ENCODE measurements at regions of chr1 and their contacts with region 1.

Region 1: GRCh38 chr1:213979751-213980586 is 7.8 kb upstream of the PROX1 start:
- DNase-seq: no peak
- ATAC-seq: peak in 1 of 4 experiments; percentile 13
- H3K4me3 ChIP-seq: no peak overlapping the region
- H3K4me3 Mint-ChIP-seq: peak overlapping the region in 1 of 3 donors; percentile 23
- H3K27ac ChIP-seq: no peak overlapping the region
- H3K27ac Mint-ChIP-seq: no peak overlapping the region
- H3K4me1 ChIP-seq: peaks cover 3 to 25% of the 10 kb centered on the region in 2 experiments
- H3K4me1 Mint-ChIP-seq: peaks cover 21 to 28% (median 26%) of the 10 kb centered on the region in 3 donors
- H3K27me3 ChIP-seq: peaks cover 16 to 60% of the 10 kb centered on the region in 2 experiments
- H3K27me3 Mint-ChIP-seq: peaks cover 73 to 77% of the 10 kb centered on the region in 2 donors

Region 2: DNA sequence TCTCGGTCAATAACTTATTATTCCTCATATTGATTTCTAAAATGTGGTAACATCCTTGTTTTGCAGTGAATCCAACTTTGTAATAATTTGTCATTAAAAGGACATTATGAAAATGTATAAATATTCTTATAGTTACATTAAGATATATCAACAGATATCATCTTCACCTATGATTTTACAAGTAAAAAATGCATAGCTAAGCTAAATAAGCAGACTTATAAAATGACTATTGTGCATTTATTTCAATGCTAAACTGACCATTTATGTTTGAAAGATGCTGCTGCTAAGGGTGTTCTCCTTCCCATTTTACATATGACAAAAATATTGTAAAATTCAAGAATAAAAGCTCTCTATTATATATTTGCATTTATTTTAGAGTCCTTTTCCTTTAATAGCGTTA is 15.6 kb after region 1 on chr1:
- CTCF ChIA-PET with region 1: interaction called in 1 of 2 experiments, 12 read pairs
- POLR2A ChIA-PET with region 1: no interaction called
- DNase-seq: no peak
- ATAC-seq: no peak
- H3K4me3 ChIP-seq: no peak overlapping the region
- H3K4me3 Mint-ChIP-seq: no peak overlapping the region
- H3K27ac ChIP-seq: no peak overlapping the region
- H3K27ac Mint-ChIP-seq: no peak overlapping the region
- H3K4me1 ChIP-seq: no peaks in the 10 kb centered on the region
- H3K4me1 Mint-ChIP-seq: no peaks in the 10 kb centered on the region
- H3K27me3 ChIP-seq: peaks cover 9 to 15% of the 10 kb centered on the region in 2 experiments
- H3K27me3 Mint-ChIP-seq: peaks cover 40 to 46% of the 10 kb centered on the region in 2 donors

Region 3: DNA sequence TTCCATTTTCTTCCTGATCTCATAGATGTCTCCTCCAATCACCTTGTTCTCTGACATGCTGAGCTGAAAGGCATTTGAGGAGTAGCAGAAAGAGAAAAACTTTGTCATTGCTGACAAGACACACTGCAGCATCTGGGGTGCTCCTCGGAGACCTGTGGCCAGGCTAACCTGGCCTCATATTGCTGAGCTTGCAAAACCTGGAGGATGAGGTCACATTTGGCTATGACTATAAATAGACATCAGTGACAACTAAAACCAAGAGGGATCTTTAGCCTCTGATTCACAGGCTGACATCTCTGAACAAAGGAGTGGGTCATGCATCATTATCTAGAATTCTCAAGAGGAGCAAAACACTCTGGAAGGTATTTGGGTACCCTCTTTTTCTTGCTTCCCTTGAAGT is 91.5 kb after region 1 on chr1:
- CTCF ChIA-PET with region 1: no interaction called
- POLR2A ChIA-PET with region 1: no interaction called
- DNase-seq: no peak
- ATAC-seq: no peak
- H3K4me3 ChIP-seq: no peak overlapping the region
- H3K4me3 Mint-ChIP-seq: no peak overlapping the region
- H3K27ac ChIP-seq: no peak overlapping the region
- H3K27ac Mint-ChIP-seq: no peak overlapping the region
- H3K4me1 ChIP-seq: no peaks in the 10 kb centered on the region
- H3K4me1 Mint-ChIP-seq: no peaks in the 10 kb centered on the region
- H3K27me3 ChIP-seq: peaks cover 0 to 2% of the 10 kb centered on the region in 2 experiments
- H3K27me3 Mint-ChIP-seq: peaks cover 14 to 23% of the 10 kb centered on the region in 2 donors

Region 4: DNA sequence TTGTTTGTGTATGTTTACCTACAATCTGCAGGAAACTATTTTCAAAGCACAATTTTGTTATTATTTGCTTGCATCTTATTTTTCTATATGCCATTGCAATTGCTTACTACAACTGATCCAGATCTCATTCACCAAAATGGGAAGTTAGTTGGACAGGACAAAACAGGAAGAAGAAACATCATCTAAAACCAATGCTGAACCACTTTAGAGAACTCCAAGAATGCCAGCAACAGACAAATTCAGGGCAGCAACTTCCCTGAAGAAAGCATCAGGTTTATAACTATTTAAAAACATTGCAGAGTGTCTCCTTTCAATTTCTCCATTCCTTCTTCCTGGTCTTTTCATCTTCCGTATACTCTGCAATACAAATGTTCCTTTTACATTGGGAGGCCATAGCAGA is 218.6 kb after region 1 on chr1:
- CTCF ChIA-PET with region 1: no interaction called
- POLR2A ChIA-PET with region 1: no interaction called
- DNase-seq: no peak
- ATAC-seq: no peak
- H3K4me3 ChIP-seq: no peak overlapping the region
- H3K4me3 Mint-ChIP-seq: no peak overlapping the region
- H3K27ac ChIP-seq: no peak overlapping the region
- H3K27ac Mint-ChIP-seq: no peak overlapping the region
- H3K4me1 ChIP-seq: no peaks in the 10 kb centered on the region
- H3K4me1 Mint-ChIP-seq: no peaks in the 10 kb centered on the region
- H3K27me3 ChIP-seq: peaks cover 0 to 2% of the 10 kb centered on the region in 2 experiments
- H3K27me3 Mint-ChIP-seq: peaks cover 30 to 39% of the 10 kb centered on the region in 2 donors

Measured in T-cell (primary cell).